ENCODE measurements at regions of chr6 and their contacts with region 1.

Region 1: DNA sequence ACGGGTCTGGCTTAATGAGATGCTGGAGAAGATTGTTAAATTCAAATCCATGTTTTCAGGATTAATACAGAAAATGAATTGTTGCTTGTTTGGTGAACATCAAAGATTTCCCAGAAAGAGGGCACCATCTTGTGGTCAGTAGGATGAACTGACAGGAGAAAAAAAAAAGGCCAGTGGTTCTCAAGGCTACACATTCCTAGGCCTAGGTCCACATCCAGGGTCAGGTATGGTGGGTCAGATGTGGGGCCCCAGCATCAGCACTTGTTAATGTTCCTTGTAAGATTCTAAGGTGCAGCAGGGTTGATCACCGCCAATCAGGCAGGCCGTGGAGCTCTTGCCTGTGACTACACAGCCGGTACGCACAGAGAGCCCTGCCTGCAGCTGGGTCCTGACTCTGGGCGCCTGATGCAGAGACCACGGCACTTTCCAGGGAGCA is 34.0 kb upstream of the FOXO3 start:
- DNase-seq: no peak
- ATAC-seq: peak in 2 of 4 donors; percentile 58 to 75
- H3K4me3 ChIP-seq: no peak overlapping the region
- H3K27ac ChIP-seq: no peak overlapping the region
- H3K4me1 ChIP-seq: no peaks in the 10 kb centered on the region
- H3K27me3 ChIP-seq: no peaks in the 10 kb centered on the region
- CTCF ChIP-seq: peak; percentile 79

Region 2: GRCh38 chr6:107982486-107982885 is 544.3 kb before region 1 on chr6:
- intact Hi-C with region 1: loop called (anchors 5 to 10 kb)
- DNase-seq: no peak
- ATAC-seq: no peak
- H3K4me3 ChIP-seq: no peak overlapping the region
- H3K27ac ChIP-seq: no peak overlapping the region
- H3K4me1 ChIP-seq: no peaks in the 10 kb centered on the region
- H3K27me3 ChIP-seq: peaks cover 0 to 10% (median 0%) of the 10 kb centered on the region in 3 donors
- CTCF ChIP-seq: no peak

Region 3: DNA sequence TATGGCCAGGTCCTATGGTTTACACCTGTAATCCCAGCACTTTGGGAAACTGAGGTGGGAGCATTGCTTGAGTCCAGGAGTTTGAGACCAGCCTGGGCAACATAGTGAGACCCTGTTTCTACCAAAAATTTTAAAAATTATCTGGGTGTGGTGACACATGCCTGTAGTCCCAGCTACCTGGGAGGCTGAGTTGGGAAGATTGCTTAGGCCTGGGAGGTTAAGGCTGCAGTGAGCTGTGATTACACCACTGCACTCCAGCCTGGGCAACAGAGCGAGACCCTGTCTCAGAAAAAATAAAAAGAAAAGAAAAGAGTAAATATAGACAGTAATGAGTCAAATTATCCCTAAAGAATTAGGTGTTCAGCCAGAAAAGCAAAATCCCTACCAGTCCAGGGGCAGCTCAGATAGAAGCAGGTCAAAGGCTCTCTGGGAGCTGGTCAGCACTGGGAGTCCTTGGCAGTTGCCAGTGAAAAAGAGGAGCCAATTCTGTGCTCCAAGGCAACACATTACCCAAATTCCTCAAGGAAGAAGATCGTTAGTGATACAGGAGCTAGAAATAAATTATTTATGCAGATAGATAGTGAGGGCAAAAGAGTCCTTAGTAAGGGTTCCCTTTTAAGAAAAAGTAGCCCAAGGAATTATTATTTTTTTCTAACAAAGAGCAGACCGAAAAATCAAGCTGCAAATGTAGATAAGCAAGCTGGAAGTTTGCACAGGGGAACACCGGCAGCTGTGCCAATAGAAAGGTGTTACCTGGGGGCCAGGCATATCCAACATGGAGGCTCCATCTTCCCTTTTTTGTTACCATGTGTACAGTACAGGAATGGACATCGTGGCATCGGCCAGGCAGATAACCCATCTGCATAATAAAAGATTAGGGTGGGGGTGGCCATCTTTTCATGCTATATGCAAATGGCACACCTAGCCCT is 537.3 kb before region 1 on chr6:
- intact Hi-C with region 1: loop called (anchors 5 to 10 kb)
- DNase-seq: no peak
- ATAC-seq: no peak
- H3K4me3 ChIP-seq: no peak overlapping the region
- H3K27ac ChIP-seq: no peak overlapping the region
- H3K4me1 ChIP-seq: no peaks in the 10 kb centered on the region
- H3K27me3 ChIP-seq: peaks cover 0 to 10% (median 0%) of the 10 kb centered on the region in 3 donors
- CTCF ChIP-seq: no peak

Region 4: DNA sequence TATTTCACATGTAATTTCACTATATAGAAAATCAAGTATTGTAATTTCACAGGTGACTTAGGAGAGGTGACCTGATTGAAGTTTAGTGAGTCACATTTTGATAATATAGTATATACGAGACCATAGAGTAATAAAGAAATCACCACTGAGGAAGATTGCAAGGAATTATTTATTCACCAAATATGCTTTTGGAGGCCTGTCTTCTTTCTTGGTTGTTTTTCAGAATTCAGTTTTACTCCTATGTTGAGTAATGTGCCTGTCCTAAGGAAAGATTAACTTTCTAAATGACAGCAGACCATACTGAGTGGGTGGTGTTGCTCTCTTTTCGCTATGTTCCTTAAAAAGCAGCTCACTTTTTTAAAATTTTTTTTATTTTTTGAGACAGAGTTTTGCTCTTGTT is 53.6 kb before region 1 on chr6:
- intact Hi-C with region 1: no loop called
- DNase-seq: no peak
- ATAC-seq: no peak
- H3K4me3 ChIP-seq: no peak overlapping the region
- H3K27ac ChIP-seq: no peak overlapping the region
- H3K4me1 ChIP-seq: no peaks in the 10 kb centered on the region
- H3K27me3 ChIP-seq: no peaks in the 10 kb centered on the region
- CTCF ChIP-seq: no peak

Region 5: GRCh38 chr6:109024784-109025183 is 498.0 kb after region 1 on chr6:
- intact Hi-C with region 1: no loop called
- DNase-seq: peak; percentile 21 to 64
- ATAC-seq: peak; percentile 51 to 63 (median 55)
- H3K4me3 ChIP-seq: peak overlapping the region; percentile 1
- H3K27ac ChIP-seq: peak overlapping the region; percentile 77
- H3K4me1 ChIP-seq: peaks cover 52% of the 10 kb centered on the region
- H3K27me3 ChIP-seq: no peaks in the 10 kb centered on the region
- CTCF ChIP-seq: peak; percentile 44

Region 6: GRCh38 chr6:109372130-109372529 is 845.4 kb after region 1 on chr6:
- intact Hi-C with region 1: no loop called
- DNase-seq: no peak
- ATAC-seq: no peak
- H3K4me3 ChIP-seq: peak overlapping the region; percentile 2
- H3K27ac ChIP-seq: peak overlapping the region; percentile 79
- H3K4me1 ChIP-seq: peaks cover 41% of the 10 kb centered on the region
- H3K27me3 ChIP-seq: no peaks in the 10 kb centered on the region
- CTCF ChIP-seq: no peak

Measured in psoas muscle (tissue), 8 donors.